ENCODE measurements at regions of chr1 and their contacts with region 1.

Region 1: DNA sequence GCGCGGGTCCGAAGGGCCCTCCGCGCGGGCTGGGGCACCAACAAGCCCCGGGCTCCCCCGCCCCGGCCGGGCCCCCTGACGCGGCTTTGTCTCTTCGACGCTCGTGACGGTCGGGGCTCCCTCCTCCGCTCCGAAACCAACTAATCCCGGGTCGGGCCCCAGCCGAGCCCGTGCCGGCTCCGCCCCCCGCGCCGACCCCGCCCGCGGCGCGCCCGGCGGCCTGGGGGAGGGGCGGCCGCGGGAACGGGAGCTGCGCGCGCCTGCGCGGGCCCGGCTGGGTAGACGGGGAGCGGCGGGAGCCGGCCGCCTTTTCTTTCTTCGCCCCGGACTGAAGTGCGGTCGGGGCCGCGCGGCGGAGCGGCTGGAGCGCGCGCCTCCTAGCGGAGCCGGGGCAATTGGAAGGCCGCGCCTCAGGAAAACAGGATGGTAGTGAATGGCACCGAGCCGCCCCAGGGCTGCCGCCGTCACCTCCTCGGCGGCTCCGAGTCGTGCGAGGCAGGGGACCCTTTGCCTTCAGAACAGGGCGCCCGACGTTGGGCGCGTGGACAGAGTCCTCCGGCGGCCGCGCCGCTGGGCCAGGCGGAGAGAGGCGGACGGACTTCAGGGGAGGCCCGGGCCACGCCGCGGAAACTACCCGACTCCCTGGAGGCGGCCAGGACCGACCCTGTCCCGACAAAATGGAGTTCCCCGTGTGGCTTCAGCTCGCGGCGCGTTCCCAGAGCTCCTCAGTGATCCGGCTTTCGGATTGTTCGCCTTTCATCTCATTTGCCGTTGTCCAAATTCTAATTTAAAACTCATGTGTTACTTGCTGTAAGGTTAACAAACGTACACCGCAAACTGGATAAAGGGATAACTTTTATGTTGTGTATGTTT is at the start of gene TP53BP2:
- DNase-seq: peak; percentile 88 to 95
- H3K4me3 ChIP-seq: peak within 1 kb of the TSS; percentile 94
- H3K4me3 Mint-ChIP-seq: peak within 1 kb of the TSS; percentile 90
- H3K27ac Mint-ChIP-seq: peak within 1 kb of the TSS; percentile 96
- H3K4me1 ChIP-seq: peaks cover 9% of the 10 kb centered on the region; the same call in 1 of the 2 replicates
- H3K4me1 Mint-ChIP-seq: no peaks in the 10 kb centered on the region
- H3K27me3 ChIP-seq: no peaks in the 10 kb centered on the region
- H3K27me3 Mint-ChIP-seq: no peaks in the 10 kb centered on the region
- CTCF ChIP-seq: peak; percentile 58 to 82
- total RNA-seq, gene TP53BP2: 49.6 and 51.2 TPM in 2 replicates

Region 2: GRCh38 chr1:223712194-223712849 is 133.7 kb before region 1 on chr1 and contains the start of gene CAPN2:
- CTCF ChIA-PET with region 1: no interaction called
- POLR2A ChIA-PET with region 1: interaction called, 4 read pairs
- intact Hi-C with region 1: loop called (anchors 5 kb)
- DNase-seq: peak; percentile 69 to 91
- H3K4me3 ChIP-seq: peak within 1 kb of the TSS; percentile 97
- H3K4me3 Mint-ChIP-seq: peak within 1 kb of the TSS; percentile 73
- H3K27ac Mint-ChIP-seq: peak within 1 kb of the TSS; percentile 14
- H3K4me1 ChIP-seq: peaks cover 82% of the 10 kb centered on the region
- H3K4me1 Mint-ChIP-seq: peaks cover 54% of the 10 kb centered on the region
- H3K27me3 ChIP-seq: no peaks in the 10 kb centered on the region
- H3K27me3 Mint-ChIP-seq: no peaks in the 10 kb centered on the region
- CTCF ChIP-seq: peak; percentile 45 to 63
- total RNA-seq, gene CAPN2: 151 and 157 TPM in 2 replicates

Region 3: DNA sequence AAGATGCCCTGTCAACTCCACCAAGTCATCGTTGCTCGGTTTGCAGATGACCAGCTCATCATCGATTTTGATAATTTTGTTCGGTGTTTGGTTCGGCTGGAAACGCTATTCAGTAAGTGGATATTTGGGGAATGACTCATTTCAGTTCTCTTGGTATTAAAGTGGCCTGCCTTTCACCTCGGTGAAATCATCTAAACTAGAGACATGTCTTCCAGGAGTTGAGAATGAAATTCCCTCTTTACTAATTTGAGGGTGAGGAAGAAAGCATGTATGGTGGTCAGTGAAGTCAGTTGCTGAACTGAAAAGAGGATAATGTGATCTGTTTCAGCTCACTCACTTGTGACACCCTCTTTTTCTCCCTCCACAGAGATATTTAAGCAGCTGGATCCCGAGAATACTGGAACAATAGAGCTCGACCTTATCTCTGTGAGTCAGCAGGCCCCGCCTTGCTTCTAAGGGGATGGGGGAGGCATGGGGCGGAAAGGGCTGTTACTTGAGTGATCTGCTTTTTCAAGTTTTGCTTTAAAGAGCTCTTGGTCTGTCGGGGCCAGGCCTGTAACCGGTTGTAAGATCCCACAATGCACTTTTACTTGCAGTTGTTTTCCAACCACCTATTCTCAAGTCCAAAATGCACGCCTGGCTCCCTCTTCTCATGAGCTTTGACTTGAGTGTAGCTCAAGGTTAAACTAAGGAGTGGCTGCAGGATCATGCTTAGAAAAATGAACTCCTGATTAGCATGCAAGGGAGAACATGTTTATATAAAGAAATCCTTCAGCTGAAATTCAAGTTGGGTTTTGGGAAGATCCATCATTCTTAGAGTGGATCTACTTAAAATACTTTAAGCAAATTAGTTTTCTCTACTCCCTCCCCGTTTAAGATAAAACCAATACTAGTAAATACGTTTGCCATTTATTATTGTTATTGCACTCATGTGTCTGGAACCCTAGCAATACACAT is 74.0 kb before region 1 on chr1:
- CTCF ChIA-PET with region 1: no interaction called
- POLR2A ChIA-PET with region 1: no interaction called
- intact Hi-C with region 1: loop called (anchors 2 kb)
- DNase-seq: peak; percentile 74 to 83
- H3K4me3 ChIP-seq: no peak overlapping the region
- H3K4me3 Mint-ChIP-seq: peak overlapping the region; percentile 56
- H3K27ac Mint-ChIP-seq: peak overlapping the region; percentile 88
- H3K4me1 ChIP-seq: peaks cover 55% of the 10 kb centered on the region
- H3K4me1 Mint-ChIP-seq: peaks cover 53% of the 10 kb centered on the region
- H3K27me3 ChIP-seq: no peaks in the 10 kb centered on the region
- H3K27me3 Mint-ChIP-seq: no peaks in the 10 kb centered on the region
- CTCF ChIP-seq: no peak

Region 4: GRCh38 chr1:223811634-223812415 is 34.2 kb before region 1 on chr1:
- CTCF ChIA-PET with region 1: interaction called, 3 read pairs
- POLR2A ChIA-PET with region 1: no interaction called
- intact Hi-C with region 1: loop called (anchors 1 kb)
- DNase-seq: peak in 1 of 2 experiments; percentile 28
- H3K4me3 ChIP-seq: no peak overlapping the region
- H3K4me3 Mint-ChIP-seq: no peak overlapping the region
- H3K27ac Mint-ChIP-seq: no peak overlapping the region
- H3K4me1 ChIP-seq: peaks cover 22% of the 10 kb centered on the region
- H3K4me1 Mint-ChIP-seq: peaks cover 16% of the 10 kb centered on the region
- H3K27me3 ChIP-seq: no peaks in the 10 kb centered on the region
- H3K27me3 Mint-ChIP-seq: no peaks in the 10 kb centered on the region
- CTCF ChIP-seq: peak in 1 of 2 experiments; percentile 40

Region 5: DNA sequence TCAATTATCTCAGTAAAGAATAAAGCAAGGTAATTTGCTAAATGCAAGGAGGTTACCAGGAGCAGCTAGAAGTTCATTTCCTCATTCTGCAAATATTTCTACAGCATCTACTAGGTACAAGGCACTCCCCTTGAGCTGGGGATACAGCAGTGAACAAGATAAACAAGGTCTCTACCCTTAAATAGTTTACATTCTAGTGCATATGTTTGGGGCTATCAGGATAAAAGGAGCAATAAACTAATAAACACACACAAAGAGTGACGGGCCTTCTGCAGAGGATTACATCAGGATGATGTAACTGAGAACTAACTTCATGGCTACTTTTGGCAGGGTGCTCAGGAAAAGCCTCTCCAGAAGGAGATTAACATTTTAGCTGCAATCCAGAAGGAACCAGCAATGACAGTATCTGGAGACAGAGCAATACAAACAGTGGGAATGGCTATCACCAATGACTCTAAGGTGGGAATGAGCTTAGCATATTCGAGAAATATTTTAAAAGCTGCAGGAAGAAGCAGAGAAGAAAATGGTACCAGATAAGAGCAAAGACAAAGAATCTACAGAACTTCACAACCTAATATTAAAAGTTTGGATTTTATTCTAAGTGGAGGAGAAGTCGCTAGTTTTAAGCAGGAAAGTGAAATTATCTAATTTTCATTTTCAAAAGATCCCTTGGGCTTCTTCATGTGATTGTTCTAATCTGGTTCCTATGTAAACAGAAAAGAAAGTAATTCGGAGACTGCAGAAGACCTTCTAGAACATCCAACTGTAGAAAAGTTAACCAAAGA is 26.1 kb before region 1 on chr1:
- CTCF ChIA-PET with region 1: interaction called, 4 read pairs
- POLR2A ChIA-PET with region 1: interaction called, 6 read pairs
- intact Hi-C with region 1: loop called (anchors 1 kb)
- DNase-seq: peak; percentile 50 to 71
- H3K4me3 ChIP-seq: no peak overlapping the region
- H3K4me3 Mint-ChIP-seq: peak overlapping the region; percentile 56
- H3K27ac Mint-ChIP-seq: peak overlapping the region; percentile 93
- H3K4me1 ChIP-seq: peaks cover 51% of the 10 kb centered on the region
- H3K4me1 Mint-ChIP-seq: peaks cover 52% of the 10 kb centered on the region
- H3K27me3 ChIP-seq: no peaks in the 10 kb centered on the region
- H3K27me3 Mint-ChIP-seq: no peaks in the 10 kb centered on the region
- CTCF ChIP-seq: no peak

Region 6: DNA sequence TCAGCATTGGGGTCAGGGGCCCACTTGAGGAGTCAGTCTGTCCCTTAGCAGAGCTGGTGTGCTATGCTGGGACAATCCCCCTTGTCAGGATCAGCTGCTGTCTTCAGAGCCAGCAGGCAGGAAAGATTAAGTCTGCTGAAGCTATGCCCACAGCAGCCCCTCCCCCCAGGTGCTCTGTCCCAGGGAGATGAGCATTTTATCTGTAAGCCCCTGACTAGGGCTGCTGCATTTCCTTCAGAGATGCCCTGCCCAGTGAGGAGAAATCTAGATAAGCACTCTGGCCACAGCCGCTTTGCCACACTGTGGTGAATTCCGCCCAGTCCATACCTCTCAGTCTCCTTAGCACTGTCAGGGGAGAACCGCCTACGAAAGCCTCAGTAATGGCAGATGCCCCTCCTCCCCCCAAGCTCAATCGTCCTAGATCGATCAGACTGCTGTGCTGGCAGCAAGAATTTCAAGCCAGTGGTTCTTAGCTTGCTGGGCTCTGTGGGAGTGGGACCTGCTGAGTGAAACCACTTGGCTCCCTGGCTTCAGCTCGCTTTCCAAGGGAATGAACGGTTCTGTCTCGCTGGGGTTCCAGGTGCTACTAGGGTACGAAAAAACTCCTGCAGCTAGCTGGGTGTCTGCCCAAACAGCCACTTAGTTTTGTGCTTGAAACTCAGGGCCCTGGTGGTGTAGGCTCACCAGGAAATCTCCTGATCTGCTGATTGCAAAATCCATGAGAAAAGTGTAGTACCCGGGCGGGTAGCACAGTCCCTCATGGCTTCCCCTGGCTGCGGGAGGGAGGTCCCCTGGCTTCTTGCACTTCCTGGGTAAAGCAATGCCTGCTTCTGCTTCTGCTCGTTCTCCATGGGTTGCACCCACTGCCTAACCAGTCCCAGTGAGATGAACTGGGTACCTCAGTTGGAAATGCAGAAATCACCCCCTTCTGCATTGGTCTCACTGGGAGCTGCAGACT is 24.9 kb after region 1 on chr1:
- CTCF ChIA-PET with region 1: no interaction called
- POLR2A ChIA-PET with region 1: no interaction called
- intact Hi-C with region 1: no loop called
- DNase-seq: no peak
- H3K4me3 ChIP-seq: no peak overlapping the region
- H3K4me3 Mint-ChIP-seq: no peak overlapping the region
- H3K27ac Mint-ChIP-seq: no peak overlapping the region
- H3K4me1 ChIP-seq: peaks cover 13% of the 10 kb centered on the region
- H3K4me1 Mint-ChIP-seq: peaks cover 8% of the 10 kb centered on the region
- H3K27me3 ChIP-seq: no peaks in the 10 kb centered on the region; the same call in 1 of the 2 replicates
- H3K27me3 Mint-ChIP-seq: peaks cover 13% of the 10 kb centered on the region
- CTCF ChIP-seq: no peak

Region 7: DNA sequence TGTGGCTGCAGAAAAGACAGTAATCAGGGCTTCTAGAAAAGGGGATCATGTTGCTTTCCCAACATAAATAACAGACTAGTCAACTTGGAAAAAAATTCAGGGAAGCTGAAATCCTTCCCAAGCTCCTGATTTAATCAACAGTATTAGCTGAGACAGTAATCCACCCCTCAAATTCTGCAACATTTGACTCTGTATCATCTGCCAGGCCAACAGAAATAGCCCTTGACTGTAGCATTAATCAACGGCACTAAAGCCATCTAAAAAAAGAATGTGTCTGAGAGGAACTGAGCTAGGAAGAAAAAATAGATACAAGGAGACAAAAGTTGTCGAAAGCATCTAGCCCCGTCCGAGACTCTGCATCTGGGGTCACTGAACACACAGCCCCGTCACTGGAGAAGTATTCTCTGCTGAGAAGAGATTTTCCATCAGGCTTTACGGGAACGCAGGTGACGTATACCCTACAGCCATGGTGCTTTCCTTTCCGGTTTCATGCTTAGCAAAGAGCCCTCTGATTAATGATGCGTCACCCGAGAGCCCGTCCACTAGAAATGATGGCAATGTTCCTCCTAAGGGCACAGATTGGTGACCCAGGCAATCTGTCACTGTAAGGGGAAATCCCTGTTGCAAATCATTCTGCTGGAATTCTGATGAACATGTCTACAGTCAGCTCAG is 41.8 kb after region 1 on chr1:
- CTCF ChIA-PET with region 1: no interaction called
- POLR2A ChIA-PET with region 1: no interaction called
- intact Hi-C with region 1: loop called (anchors 1 kb)
- DNase-seq: no peak
- H3K4me3 ChIP-seq: no peak overlapping the region
- H3K4me3 Mint-ChIP-seq: no peak overlapping the region
- H3K27ac Mint-ChIP-seq: no peak overlapping the region
- H3K4me1 ChIP-seq: no peaks in the 10 kb centered on the region
- H3K4me1 Mint-ChIP-seq: peaks cover 6% of the 10 kb centered on the region
- H3K27me3 ChIP-seq: no peaks in the 10 kb centered on the region
- H3K27me3 Mint-ChIP-seq: no peaks in the 10 kb centered on the region
- CTCF ChIP-seq: no peak

Region 8: DNA sequence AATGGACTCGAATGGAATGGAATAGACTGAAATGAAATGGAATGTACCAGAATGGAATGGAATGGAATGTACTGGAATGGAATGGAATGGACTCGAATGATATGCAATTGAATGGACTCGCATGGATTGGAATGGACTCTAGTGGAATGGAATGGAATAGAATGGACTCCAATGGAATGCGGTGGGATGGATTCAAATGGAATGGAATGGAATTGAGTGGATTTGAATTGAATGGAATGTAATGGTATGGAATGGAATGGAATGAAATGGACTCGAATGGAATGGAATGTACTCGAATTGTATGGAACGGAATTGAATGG is 168.2 kb after region 1 on chr1:
- CTCF ChIA-PET with region 1: no interaction called
- POLR2A ChIA-PET with region 1: no interaction called
- intact Hi-C with region 1: no loop called
- DNase-seq: no peak
- H3K4me3 ChIP-seq: no peak overlapping the region
- H3K4me3 Mint-ChIP-seq: no peak overlapping the region
- H3K27ac Mint-ChIP-seq: no peak overlapping the region
- H3K4me1 ChIP-seq: no peaks in the 10 kb centered on the region
- H3K4me1 Mint-ChIP-seq: no peaks in the 10 kb centered on the region
- H3K27me3 ChIP-seq: no peaks in the 10 kb centered on the region
- H3K27me3 Mint-ChIP-seq: no peaks in the 10 kb centered on the region
- CTCF ChIP-seq: no peak

Region 9: DNA sequence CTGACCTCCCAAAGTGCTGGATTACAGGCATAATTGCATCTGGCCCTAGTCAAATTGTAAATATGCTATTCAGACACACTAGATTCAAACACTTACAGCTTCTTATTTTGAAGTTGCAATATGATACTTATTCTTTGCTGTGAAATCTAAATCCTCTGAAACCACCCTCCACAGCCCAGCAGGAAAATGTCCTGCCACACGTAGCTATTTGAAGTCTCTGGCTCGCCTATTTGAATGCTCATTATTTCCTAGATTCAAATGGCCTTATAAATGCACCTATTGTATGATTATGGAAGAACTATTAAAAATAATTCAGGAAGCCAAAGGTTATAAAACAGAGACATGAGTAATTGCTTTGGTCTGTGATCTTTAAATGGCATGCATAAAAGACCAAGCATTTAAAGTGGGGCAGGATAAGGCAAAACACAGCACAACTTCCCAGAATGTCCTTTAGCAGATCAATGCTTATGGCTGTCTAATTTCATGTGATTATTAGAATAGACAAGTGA is 241.3 kb after region 1 on chr1:
- CTCF ChIA-PET with region 1: no interaction called
- POLR2A ChIA-PET with region 1: no interaction called
- intact Hi-C with region 1: no loop called
- DNase-seq: no peak
- H3K4me3 ChIP-seq: no peak overlapping the region
- H3K4me3 Mint-ChIP-seq: no peak overlapping the region
- H3K27ac Mint-ChIP-seq: no peak overlapping the region
- H3K4me1 ChIP-seq: no peaks in the 10 kb centered on the region
- H3K4me1 Mint-ChIP-seq: peaks cover 6% of the 10 kb centered on the region
- H3K27me3 ChIP-seq: no peaks in the 10 kb centered on the region
- H3K27me3 Mint-ChIP-seq: peaks cover 6% of the 10 kb centered on the region
- CTCF ChIP-seq: no peak

Measured in Caco-2 (cell line).